BJ (cell line): ENCODE measurements at regions of chr6 and their contacts with region 1.

Region 1: GRCh38 chr6:33700391-33701050 is 11.0 kb downstream of the UQCC2 start:
- DNase-seq: no peak
- H3K4me3 ChIP-seq: no peak overlapping the region
- H3K27me3 ChIP-seq: no peaks in the 10 kb centered on the region
- CTCF ChIP-seq: peak; percentile 88

Region 2: GRCh38 chr6:33329058-33329457 is 371.5 kb before region 1 on chr6:
- CTCF ChIA-PET with region 1: no interaction called
- POLR2A ChIA-PET with region 1: no interaction called
- DNase-seq: no peak
- H3K4me3 ChIP-seq: no peak overlapping the region
- H3K27me3 ChIP-seq: peaks cover 3% of the 10 kb centered on the region; the same call in 1 of the 2 replicates
- CTCF ChIP-seq: no peak

Region 3: DNA sequence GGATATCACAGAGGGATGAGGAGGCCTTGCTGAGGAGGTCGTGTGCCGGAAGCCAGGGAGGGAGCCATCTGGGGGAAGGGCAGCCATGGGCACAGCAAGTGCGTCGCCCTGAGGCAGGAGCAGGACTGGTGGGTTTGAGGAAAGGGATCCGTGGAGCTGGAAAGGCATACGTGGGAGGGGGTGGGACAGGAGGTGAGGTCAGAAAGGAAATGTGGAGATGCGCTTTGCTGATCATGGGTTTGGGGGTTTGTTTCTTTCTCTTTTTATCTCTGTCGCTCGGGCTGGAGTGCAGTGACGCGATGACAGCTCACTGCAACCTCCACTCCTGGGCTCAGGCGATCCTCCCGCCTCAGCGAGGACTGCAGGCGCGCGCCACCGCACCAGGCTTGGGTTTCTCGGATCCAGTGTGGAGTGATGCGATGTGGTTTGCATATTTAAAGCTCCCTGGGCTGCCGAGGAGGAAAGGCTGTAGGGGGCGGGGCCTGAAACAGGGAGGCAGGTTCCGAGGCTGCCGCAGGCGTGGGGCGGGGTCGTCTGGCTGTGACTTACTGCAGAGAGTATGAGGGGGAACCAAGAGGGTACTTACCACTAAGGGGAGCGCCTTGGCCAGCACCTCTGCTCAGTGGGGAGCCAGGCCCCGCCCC is 108.0 kb before region 1 on chr6:
- CTCF ChIA-PET with region 1: interaction called, 335 read pairs
- POLR2A ChIA-PET with region 1: no interaction called
- DNase-seq: no peak
- H3K4me3 ChIP-seq: no peak overlapping the region
- H3K27me3 ChIP-seq: no peaks in the 10 kb centered on the region
- CTCF ChIP-seq: no peak

Region 4: DNA sequence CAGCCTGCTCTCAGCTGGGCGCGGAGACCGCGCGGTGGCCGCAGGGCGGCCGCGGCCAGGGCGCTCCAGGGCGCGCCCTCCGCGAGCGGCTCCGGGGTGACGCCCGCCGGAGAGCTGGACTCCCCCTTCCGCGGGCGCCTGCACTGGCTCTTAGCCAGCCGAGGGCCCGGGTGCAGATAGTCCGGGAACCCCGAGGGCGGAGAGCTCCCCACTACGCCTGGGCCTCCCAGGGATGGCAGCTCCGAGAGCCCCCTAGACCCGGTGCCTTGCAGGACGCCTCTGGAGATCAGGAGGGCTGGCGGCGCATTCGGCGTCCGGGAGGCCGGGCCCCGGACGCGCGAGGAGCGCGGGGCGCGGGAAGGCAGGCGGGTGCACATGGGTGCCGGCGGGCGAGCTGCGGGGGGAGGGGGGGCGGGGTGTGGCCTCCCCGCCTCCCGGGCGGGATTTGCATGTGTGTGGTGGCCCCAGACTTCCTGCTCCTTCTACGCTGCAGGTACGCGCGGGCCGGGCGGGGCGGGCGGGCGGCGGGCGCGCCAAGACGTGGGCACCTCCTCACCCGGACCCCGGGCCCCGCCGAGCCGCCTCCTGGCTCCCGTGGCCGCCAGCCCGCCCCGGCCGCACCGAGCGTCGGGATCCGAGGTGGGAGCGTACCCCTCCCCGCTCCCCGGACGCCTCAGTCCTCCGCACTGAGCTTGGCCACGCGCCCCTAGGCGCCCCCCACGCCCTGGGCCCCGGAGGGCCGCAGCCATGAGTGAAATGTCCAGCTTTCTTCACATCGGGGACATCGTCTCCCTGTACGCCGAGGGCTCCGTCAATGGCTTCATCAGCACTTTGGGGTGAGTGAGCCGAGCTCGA is 79.4 kb before region 1 on chr6 and contains the start of gene ITPR3:
- CTCF ChIA-PET with region 1: interaction called, 12 read pairs
- POLR2A ChIA-PET with region 1: no interaction called
- DNase-seq: no peak
- H3K4me3 ChIP-seq: peak within 1 kb of the TSS; percentile 62
- H3K27me3 ChIP-seq: no peaks in the 10 kb centered on the region
- CTCF ChIP-seq: no peak
- polyA plus RNA-seq, gene ITPR3: 8.6 and 16.6 TPM in 2 replicates

Region 5: GRCh38 chr6:33654831-33655554 is 45.5 kb before region 1 on chr6:
- CTCF ChIA-PET with region 1: interaction called, 13 read pairs
- POLR2A ChIA-PET with region 1: no interaction called
- DNase-seq: peak; percentile 16
- H3K4me3 ChIP-seq: no peak overlapping the region
- H3K27me3 ChIP-seq: no peaks in the 10 kb centered on the region
- CTCF ChIP-seq: no peak

Region 6: DNA sequence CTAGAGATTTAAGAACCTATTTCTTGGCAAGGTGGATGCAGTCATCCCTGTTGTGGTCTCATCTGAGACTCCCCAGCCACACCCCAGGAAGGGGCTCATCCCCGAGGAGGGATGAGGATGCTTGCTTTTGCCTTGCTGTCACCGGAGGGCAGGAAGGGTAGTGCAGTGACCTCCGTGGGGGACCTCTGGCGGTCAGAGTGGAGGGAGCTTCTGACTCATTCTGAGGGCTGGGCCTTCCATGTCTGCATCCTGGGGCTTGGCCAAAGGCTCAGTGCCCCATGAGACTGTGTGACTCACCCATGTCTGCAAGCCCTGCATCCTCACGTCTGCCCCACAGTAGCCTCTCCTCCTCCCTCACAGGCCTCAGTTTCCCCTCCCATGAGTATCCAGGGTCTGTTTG is 27.7 kb before region 1 on chr6:
- CTCF ChIA-PET with region 1: interaction called, 20 read pairs
- POLR2A ChIA-PET with region 1: no interaction called
- DNase-seq: peak; percentile 84
- H3K4me3 ChIP-seq: no peak overlapping the region
- H3K27me3 ChIP-seq: no peaks in the 10 kb centered on the region
- CTCF ChIP-seq: peak; percentile 76

Region 7: GRCh38 chr6:34065466-34066217 is 365.1 kb after region 1 on chr6:
- CTCF ChIA-PET with region 1: no interaction called
- POLR2A ChIA-PET with region 1: no interaction called
- DNase-seq: no peak
- H3K4me3 ChIP-seq: no peak overlapping the region
- H3K27me3 ChIP-seq: peaks cover 19% of the 10 kb centered on the region
- CTCF ChIP-seq: no peak

Region 8: DNA sequence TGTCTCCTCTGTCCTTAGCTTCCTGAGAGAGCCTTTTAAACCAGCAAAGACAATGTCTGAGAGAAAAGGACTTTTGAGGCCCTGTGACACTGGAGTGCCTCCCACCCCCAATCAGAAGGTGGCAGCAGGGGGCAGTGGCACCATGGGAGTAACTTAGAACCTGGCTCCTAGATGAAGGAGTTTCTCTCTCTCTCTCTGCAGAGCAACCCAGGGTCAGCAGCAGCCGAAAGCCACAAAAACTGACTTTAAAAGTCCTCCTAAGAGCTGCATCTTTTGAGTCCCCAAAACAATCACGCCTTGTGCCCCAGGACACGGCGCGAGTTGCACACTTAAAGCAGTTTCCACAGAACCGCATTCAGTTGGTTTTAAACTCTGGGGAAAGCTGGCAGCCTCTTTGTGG is 1445.9 kb after region 1 on chr6:
- CTCF ChIA-PET with region 1: no interaction called
- POLR2A ChIA-PET with region 1: no interaction called
- DNase-seq: no peak
- H3K4me3 ChIP-seq: no peak overlapping the region
- H3K27me3 ChIP-seq: no peaks in the 10 kb centered on the region
- CTCF ChIP-seq: peak; percentile 74